GM13976 (cell line): ENCODE measurements at regions of chr10 and their contacts with region 1.

Region 1: GRCh38 chr10:6114805-6115341 is 26.0 kb downstream of the RBM17 start:
- DNase-seq: no peak
- CTCF ChIP-seq: no peak

Region 2: DNA sequence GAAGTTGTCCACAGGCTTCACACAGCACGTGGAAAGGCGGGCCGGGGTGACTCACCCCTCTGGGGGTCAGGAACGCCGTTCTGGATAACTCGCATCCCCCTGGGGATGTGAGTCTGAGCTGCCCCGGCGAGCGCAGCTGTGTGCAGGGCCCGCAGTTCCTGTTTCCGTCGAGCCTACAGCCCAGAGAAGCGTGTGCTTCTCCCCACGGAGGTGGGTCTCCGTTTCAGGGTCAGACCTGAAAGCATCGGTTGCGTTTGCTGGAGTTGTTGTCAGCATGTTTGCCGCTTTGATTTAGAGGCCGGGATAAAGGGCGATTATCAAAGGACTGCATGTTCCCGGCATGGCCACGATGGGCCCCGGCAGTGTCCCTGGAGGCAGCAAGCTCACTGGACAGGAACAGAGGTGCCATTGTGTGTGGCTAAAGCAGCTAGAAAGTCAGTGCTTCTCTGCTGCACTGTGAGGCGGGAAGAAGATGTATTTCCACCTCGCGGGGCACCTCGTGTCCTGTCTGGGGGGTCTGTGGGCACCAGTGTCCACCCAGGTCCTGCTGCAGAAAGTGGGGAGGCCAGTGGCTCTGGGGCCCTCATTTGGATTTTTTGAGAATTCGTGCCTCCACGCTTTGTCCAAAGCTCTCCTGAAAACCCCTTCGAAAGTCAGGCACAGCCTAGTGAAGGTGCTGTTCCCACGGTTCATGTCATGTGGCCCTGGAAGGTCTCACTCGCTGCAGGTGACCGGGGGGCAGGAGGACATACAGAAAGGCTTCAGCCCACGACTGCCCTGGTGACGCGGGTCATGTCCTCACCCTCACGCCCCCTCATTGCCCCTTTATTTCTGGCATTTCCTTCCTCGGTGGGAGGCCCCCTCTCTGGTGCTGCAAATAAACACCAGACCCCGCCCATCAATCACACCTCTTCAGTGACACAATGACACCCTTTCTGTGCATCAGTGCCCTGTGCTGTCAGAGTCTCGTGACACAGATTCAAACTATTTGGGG is 274.3 kb before region 1 on chr10:
- in situ Hi-C with region 1: no loop called
- DNase-seq: peak; percentile 85
- CTCF ChIP-seq: no peak

Region 3: DNA sequence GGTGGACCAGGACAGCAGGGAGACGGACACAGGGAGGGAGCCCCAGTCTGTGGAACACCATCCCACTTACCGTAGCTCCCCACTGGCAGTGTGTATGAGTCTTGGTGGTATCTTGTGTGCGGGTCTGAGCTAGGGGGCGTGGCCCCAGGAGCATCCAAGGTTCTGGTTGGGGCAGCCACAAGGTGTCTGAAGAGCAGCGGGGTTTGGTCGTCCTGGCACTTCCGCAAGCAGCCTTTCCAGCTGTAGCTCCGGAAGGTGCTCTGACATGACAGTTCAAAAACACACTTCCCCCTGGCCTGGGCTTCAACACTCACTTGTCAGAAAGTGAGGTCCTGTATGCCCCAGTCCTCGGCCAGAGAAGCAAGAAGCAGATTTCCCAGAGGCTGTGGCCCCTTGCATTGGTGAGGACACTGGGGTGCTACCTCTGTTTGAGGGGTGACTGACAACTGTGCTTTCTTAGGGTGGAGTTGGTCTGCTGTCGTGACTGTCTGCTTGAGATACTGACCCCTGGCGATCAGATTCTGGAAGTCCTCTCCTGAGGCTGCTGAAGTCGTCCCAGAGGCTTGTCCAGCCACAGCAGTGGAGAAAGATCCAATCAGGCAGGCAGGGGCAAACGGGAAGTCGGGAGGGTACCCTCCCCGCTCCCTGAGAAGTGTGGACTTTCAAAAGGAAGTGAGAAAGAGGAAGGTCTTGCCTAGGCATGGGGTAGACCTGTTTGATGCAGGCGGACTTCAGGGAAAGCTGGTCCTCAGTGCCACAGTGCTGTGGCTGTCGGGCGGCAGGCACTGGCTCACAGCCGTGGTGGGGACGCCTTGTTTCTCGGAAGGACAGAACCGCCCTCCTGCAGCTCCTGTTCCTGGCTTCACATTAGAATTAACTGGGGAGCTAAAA is 36.5 kb after region 1 on chr10:
- in situ Hi-C with region 1: loop called (anchors 5 kb)
- DNase-seq: peak; percentile 79
- CTCF ChIP-seq: peak; percentile 46

Region 4: GRCh38 chr10:6401562-6402348 is 286.9 kb after region 1 on chr10:
- in situ Hi-C with region 1: loop called (anchors 5 kb)
- DNase-seq: peak; percentile 87
- CTCF ChIP-seq: peak; percentile 86